Body of pancreas (tissue), 4 donors: ENCODE measurements at regions of chr16 and their contacts with region 1.

Region 1: GRCh38 chr16:70679666-70680494 is 6.0 kb downstream of the MTSS2 start:
- DNase-seq: no peak
- ATAC-seq: no peak
- H3K4me3 ChIP-seq: no peak overlapping the region
- H3K27ac ChIP-seq: peak overlapping the region in 2 of 4 donors; percentile 52 to 53
- H3K4me1 ChIP-seq: peaks cover 47% of the 10 kb centered on the region
- H3K27me3 ChIP-seq: no peaks in the 10 kb centered on the region
- CTCF ChIP-seq: peak in 4 of 7 experiments; percentile 12 to 60 (median 39)
- POLR2A ChIP-seq: no peak

Region 2: GRCh38 chr16:70416748-70417616 is 262.9 kb before region 1 on chr16:
- intact Hi-C with region 1: no loop called
- DNase-seq: no peak
- ATAC-seq: no peak
- H3K4me3 ChIP-seq: no peak overlapping the region
- H3K27ac ChIP-seq: no peak overlapping the region
- H3K4me1 ChIP-seq: peaks cover 6% of the 10 kb centered on the region
- H3K27me3 ChIP-seq: no peaks in the 10 kb centered on the region
- CTCF ChIP-seq: no peak
- POLR2A ChIP-seq: no peak

Region 3: DNA sequence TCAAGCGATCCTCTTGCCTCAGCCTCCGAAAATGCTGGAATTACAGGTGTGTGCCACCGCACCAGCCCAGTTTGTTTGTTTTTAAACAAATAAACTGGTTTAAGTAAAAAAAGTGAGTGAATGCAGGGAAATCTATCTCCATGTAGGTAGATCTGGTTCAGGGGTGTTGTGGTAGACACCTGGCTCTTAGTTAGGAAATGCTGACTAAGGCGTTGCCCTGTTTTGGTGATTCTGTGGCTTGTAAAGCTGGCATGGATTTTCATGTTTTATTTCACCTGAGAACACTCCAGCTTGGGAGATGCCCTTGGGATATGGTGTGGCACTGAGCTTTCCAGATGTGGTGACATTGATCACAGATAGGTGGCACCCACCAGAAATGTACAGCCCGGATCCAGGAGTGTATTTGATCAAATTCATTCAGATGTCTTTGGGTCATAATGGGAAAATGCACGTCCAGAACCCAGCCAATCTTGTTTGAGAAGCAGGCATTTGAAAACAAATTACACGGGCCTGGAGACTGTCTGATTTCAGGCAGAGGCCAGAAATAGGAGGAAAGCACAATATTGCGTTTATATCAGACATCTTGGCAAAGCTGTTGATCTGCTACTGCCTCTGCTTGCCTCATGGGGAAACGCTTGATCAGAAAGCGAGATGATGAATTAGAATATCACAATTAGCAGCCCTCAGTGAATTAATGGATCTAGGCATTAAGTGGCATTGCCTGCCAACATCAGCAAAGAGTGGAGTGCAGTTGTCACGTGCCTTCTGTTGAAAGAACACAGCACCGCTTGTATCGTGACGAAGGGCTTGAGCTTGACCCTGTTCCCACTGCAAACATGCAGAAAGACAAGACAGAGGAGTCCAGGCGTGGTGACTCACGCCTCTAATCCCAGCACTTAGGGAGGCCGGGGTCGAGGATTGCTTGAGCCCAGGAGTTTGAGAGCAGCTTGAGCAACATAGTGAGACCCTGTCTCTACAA is 40.8 kb before region 1 on chr16:
- intact Hi-C with region 1: no loop called
- DNase-seq: peak in 2 of 4 donors; percentile 31 to 55
- ATAC-seq: no peak
- H3K4me3 ChIP-seq: no peak overlapping the region
- H3K27ac ChIP-seq: no peak overlapping the region
- H3K4me1 ChIP-seq: no peaks in the 10 kb centered on the region
- H3K27me3 ChIP-seq: no peaks in the 10 kb centered on the region
- CTCF ChIP-seq: no peak
- POLR2A ChIP-seq: no peak

Region 4: GRCh38 chr16:70725912-70726828 is 46.3 kb after region 1 on chr16:
- intact Hi-C with region 1: no loop called
- DNase-seq: peak in 1 of 4 donors; percentile 45
- ATAC-seq: peak; percentile 28
- H3K4me3 ChIP-seq: no peak overlapping the region
- H3K27ac ChIP-seq: peak overlapping the region; percentile 65 to 84 (median 74)
- H3K4me1 ChIP-seq: peaks cover 28% of the 10 kb centered on the region
- H3K27me3 ChIP-seq: no peaks in the 10 kb centered on the region
- CTCF ChIP-seq: no peak
- POLR2A ChIP-seq: no peak

Region 5: GRCh38 chr16:70767377-70768202 is 87.7 kb after region 1 on chr16:
- intact Hi-C with region 1: loop called (anchors 5 kb)
- DNase-seq: no peak
- ATAC-seq: no peak
- H3K4me3 ChIP-seq: no peak overlapping the region
- H3K27ac ChIP-seq: no peak overlapping the region
- H3K4me1 ChIP-seq: no peaks in the 10 kb centered on the region
- H3K27me3 ChIP-seq: no peaks in the 10 kb centered on the region
- CTCF ChIP-seq: no peak
- POLR2A ChIP-seq: no peak